Activated CD4-positive, alpha-beta memory T cell treated with anti-CD3 and anti-CD28 coated beads, Interleukin-2, amount 10 ng/mL, durations not matched to agents 7 days and 5 days (primary cell): ENCODE measurements at regions of chr4 and their contacts with region 1.

Region 1: GRCh38 chr4:102760645-102761295 is at the start of gene MANBA:
- DNase-seq: peak; percentile 89
- H3K4me3 Mint-ChIP-seq: peak within 1 kb of the TSS; percentile 99
- H3K27ac Mint-ChIP-seq: peak within 1 kb of the TSS; percentile 81
- H3K4me1 Mint-ChIP-seq: peaks cover 26% of the 10 kb centered on the region
- H3K27me3 Mint-ChIP-seq: peaks cover 8% of the 10 kb centered on the region
- total RNA-seq, gene MANBA: 13.6 to 14.5 TPM

Region 2: GRCh38 chr4:102789317-102789717 is 28.5 kb after region 1 on chr4:
- CTCF ChIA-PET with region 1: interaction called, 3 read pairs
- POLR2A ChIA-PET with region 1: interaction called, 11 read pairs
- DNase-seq: no peak
- H3K4me3 Mint-ChIP-seq: no peak overlapping the region
- H3K27ac Mint-ChIP-seq: no peak overlapping the region
- H3K4me1 Mint-ChIP-seq: peaks cover 17% of the 10 kb centered on the region
- H3K27me3 Mint-ChIP-seq: no peaks in the 10 kb centered on the region

Region 3: DNA sequence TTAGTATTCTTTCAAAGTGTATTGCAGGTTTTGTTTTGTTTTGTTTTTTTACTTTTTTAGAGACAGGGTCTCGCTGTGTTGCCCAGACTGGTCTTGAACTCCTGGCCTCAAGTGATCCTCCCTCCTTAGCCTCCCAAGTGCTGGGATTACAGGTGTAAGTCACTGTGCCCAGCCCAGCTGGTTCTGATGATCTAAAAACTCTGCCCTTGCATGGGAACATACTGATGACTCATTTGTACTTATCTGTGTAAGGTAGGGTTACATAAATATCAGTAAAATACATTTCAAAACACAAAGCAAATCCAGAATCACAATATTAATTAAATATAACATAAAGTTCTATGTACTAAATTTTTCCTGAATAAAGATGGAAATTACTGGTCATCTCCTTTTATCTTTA is 266.1 kb after region 1 on chr4:
- CTCF ChIA-PET with region 1: no interaction called
- POLR2A ChIA-PET with region 1: no interaction called
- DNase-seq: no peak
- H3K4me3 Mint-ChIP-seq: no peak overlapping the region
- H3K27ac Mint-ChIP-seq: no peak overlapping the region
- H3K4me1 Mint-ChIP-seq: no peaks in the 10 kb centered on the region
- H3K27me3 Mint-ChIP-seq: no peaks in the 10 kb centered on the region